Right ventricle myocardium superior (tissue), 1 donor: ENCODE measurements at regions of chr18 and their contacts with region 1.

Region 1: DNA sequence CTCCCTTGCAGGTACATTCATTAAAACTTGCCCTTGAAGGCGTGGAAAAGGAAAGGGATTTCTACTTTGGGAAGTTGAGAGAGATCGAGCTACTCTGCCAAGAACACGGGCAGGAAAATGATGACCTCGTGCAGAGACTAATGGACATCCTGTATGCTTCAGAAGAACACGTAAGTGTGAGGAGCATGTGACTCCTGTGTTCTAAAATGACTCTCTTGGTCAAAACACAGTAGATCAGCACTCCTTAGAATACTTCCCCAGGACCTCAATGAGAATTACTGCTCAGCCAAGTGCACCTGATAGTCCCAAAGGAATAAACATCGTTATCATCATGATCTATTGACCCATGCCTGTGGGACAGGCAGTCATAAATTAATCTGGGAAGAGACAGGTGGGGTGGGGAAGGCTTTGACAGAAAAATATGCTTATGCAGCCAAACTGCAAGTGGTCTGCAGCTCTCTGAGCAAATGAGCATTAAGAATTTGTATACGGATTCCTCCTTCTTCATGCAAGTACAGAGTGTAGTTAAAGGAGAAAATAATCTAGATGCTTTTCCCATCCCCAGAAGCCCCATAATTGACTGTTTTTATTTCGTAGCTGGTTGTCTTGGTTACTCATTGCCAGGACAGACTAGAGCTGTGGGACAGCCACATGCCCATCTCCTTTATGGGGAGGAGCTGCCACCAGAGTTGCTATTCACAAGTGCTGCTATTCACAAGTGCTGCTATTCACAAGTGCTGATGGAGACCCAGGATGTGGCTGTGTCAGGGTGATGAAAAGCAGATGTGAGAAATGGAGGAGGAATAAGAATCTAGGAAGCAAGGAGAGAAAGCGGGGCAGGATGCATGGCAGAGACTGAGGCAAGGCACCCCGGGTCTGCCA is 91.0 kb downstream of the MAPRE2 start:
- DNase-seq: no peak
- ATAC-seq: peak; percentile 54

Region 2: DNA sequence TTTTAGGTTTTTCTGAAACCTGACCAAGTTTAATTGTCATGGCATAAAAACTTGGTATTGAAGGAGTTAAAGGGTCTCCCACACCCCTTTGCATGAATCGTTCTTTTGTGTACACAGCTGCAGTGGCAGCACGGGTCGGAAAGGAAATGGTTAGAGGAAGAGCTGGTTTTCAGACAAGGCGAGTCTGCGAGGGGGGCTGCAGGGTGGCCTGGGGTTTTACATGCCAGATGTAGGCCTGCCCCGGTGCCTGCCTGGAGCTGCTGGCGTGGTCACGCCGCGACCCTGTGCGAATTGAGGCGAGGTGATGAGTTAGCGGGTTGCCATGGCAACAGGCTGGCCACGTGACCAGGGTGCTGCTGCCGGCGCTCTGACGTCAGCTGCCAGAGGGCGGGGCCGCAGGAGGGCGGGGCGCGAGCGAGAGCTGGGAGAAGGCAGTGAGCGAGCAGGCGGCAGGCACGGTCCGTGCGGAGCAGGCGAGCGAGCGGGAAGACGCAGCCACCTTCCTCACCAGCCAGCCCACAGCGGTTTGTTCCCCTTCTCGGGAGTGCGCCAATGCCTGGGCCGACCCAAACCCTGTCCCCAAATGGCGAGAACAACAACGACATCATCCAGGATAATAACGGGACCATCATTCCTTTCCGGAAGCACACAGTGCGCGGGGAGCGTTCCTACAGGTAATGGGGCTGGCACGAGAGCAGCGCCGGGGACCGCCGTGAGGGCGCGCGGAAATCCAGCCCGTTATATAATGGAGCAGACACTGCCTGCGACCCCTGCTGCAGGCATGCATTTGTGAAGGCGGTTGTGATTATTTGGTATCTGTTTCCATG is 91.1 kb before region 1 on chr18 and contains the start of gene MAPRE2:
- intact Hi-C with region 1: loop called (anchors 5 kb)
- DNase-seq: peak; percentile 100
- ATAC-seq: peak; percentile 97
- total RNA-seq, gene MAPRE2: 101 TPM